GM10248 (cell line): ENCODE measurements at regions of chr15 and their contacts with region 1.

Region 1: GRCh38 chr15:99556011-99556410 is 9.8 kb upstream of the MEF2A start:
- DNase-seq: no peak
- CTCF ChIP-seq: no peak

Region 2: GRCh38 chr15:99545605-99546004 is 10.4 kb before region 1 on chr15:
- CTCF ChIA-PET with region 1: interaction called, 12 read pairs
- POLR2A ChIA-PET with region 1: no interaction called
- DNase-seq: no peak
- CTCF ChIP-seq: no peak

Region 3: DNA sequence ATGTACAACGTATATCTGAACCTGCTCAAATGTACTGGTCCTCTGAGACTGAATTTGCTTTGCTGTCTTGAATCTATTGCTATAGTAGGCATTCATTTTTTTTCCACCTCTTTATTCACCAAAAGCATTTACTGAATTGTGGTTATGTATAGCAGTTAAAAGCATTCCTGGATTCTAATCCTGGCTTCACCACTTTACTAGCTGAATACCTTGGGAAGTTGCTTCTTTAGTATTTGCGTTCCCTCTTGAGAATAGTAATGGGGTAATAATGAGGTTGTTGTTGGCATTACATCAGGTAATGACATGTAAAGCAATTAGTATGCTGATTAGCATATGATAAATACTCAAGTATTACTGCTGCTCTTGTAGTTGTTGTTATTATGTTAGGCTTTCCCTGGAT is 38.9 kb after region 1 on chr15:
- CTCF ChIA-PET with region 1: no interaction called
- POLR2A ChIA-PET with region 1: no interaction called
- DNase-seq: no peak
- CTCF ChIP-seq: no peak